T-cell (primary cell): ENCODE measurements at regions of chr16 and their contacts with region 1.

Region 1: DNA sequence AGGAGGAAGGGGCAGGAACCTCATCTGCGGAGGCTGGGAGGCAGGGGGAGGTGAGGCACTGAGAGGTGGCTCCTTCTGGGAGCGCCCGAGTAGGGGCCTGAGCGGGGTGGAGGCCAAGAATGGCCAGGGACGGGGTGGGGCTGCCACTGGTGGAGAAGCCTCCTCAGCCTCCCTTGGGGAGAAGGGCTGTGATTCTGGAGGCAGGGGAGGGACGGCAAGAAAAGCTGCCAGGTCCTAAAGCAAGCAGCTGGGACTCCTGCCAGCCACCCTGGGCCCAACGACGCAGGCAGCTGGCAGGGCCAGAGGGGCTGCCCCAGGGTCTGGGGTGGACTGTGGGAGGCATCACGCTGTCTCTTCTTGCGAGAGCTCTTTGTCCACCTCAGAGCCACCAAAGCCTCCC is 12.7 kb upstream of the MLKL start:
- DNase-seq: no peak
- ATAC-seq: no peak
- H3K4me3 ChIP-seq: no peak overlapping the region
- H3K4me3 Mint-ChIP-seq: no peak overlapping the region
- H3K27ac ChIP-seq: no peak overlapping the region
- H3K27ac Mint-ChIP-seq: no peak overlapping the region
- H3K4me1 ChIP-seq: no peaks in the 10 kb centered on the region
- H3K4me1 Mint-ChIP-seq: peaks cover 3 to 7% (median 5%) of the 10 kb centered on the region in 3 donors
- H3K27me3 ChIP-seq: no peaks in the 10 kb centered on the region
- H3K27me3 Mint-ChIP-seq: no peaks in the 10 kb centered on the region

Region 2: DNA sequence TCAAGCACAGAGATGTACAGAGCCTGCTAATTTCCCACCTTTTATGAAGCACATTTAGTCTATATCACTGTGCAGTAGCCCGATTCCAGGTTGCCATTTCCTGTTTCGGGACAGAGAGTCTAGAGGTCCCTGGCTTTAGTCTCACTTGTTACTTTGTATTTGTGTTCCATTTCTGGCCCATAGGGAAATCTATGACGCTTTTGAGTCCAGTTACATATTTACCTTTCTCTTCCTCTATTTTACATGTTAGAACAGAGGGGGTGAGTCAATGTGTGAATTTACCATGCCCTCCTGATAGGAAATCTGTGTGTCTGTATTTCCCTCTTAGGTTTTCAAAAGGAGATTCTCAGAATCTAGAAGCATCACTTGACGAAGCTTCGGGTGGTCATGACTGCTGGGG is 1438.3 kb before region 1 on chr16:
- CTCF ChIA-PET with region 1: no interaction called
- POLR2A ChIA-PET with region 1: no interaction called
- DNase-seq: no peak
- ATAC-seq: no peak
- H3K4me3 ChIP-seq: no peak overlapping the region
- H3K4me3 Mint-ChIP-seq: no peak overlapping the region
- H3K27ac ChIP-seq: no peak overlapping the region
- H3K27ac Mint-ChIP-seq: no peak overlapping the region
- H3K4me1 ChIP-seq: no peaks in the 10 kb centered on the region
- H3K4me1 Mint-ChIP-seq: no peaks in the 10 kb centered on the region
- H3K27me3 ChIP-seq: peaks cover 0 to 2% of the 10 kb centered on the region in 2 experiments
- H3K27me3 Mint-ChIP-seq: peaks cover 2 to 4% of the 10 kb centered on the region in 2 donors

Region 3: DNA sequence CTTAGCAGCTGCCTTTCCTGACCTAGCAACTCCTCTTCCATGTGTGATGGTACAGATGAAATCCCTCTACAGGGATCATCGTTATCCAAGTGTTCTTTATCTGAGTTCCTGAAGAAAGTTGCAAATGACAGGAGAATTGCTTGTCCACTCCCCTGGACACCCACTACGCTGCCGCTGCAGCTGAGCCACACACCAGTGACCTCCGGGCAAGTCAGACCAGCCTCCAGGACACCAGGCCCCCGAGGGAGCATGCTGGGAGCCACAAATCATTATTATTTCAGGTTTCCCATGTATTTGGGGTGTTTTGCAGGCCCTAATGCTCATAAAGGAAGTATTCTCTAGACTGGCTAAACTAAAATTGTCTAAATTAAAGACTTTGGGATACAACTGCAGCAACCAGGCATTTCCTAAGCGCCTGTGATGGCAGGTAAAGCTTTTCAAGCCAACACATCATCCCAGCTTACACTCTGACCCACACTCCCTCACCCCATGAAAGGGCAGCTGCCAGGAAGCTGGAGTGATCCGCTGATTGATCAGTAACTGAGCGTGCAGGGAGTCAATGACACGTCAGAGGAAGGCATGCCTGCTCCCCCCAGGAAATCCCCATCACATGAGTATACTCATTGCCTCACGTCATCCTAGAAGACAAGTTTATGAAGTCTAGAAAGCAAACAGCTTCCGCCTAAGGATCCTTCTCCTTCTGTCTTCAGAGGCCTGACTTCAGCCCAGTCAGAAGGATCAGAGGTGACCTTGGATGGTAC is 46.9 kb after region 1 on chr16:
- CTCF ChIA-PET with region 1: no interaction called
- POLR2A ChIA-PET with region 1: no interaction called
- DNase-seq: peak in 1 of 35 experiments; percentile 24
- ATAC-seq: peak in 1 of 4 experiments; percentile 16
- H3K4me3 ChIP-seq: no peak overlapping the region
- H3K4me3 Mint-ChIP-seq: no peak overlapping the region
- H3K27ac ChIP-seq: no peak overlapping the region
- H3K27ac Mint-ChIP-seq: no peak overlapping the region
- H3K4me1 ChIP-seq: no peaks in the 10 kb centered on the region
- H3K4me1 Mint-ChIP-seq: no peaks in the 10 kb centered on the region
- H3K27me3 ChIP-seq: no peaks in the 10 kb centered on the region
- H3K27me3 Mint-ChIP-seq: peaks cover 4 to 12% of the 10 kb centered on the region in 2 donors

Region 4: GRCh38 chr16:74771656-74772315 is 58.5 kb after region 1 on chr16:
- CTCF ChIA-PET with region 1: no interaction called
- POLR2A ChIA-PET with region 1: no interaction called
- DNase-seq: no peak
- ATAC-seq: no peak
- H3K4me3 ChIP-seq: no peak overlapping the region
- H3K4me3 Mint-ChIP-seq: no peak overlapping the region
- H3K27ac ChIP-seq: no peak overlapping the region
- H3K27ac Mint-ChIP-seq: no peak overlapping the region
- H3K4me1 ChIP-seq: peaks cover 4 to 9% of the 10 kb centered on the region in 2 experiments
- H3K4me1 Mint-ChIP-seq: peaks cover 8 to 17% (median 12%) of the 10 kb centered on the region in 3 donors
- H3K27me3 ChIP-seq: peaks cover 0 to 55% of the 10 kb centered on the region in 2 experiments
- H3K27me3 Mint-ChIP-seq: peaks cover 34 to 44% of the 10 kb centered on the region in 2 donors

Region 5: DNA sequence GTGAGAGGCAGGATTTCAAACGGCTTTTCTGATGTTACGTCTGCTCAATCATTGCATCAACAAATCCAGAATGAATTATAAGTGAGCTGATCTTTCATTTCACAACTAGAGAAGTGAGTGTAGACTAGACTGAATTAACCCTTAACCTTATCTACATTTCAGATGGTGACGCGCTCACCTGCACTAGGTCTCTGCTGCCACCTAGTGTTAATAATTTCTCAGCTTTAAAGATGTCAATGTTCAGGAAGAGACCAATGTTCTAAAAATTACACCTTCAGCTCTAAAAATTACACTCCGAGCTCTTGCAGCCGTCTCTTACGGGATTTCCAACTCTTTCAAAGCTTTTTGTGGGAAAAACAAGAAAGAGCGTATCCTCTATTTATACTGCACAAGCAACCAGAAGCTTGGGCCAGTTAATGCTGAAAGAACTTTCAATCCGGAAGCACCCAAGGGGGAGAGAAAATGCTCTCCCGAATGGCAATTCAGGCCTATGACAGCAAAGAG is 149.5 kb after region 1 on chr16:
- CTCF ChIA-PET with region 1: interaction called, 6 to 12 read pairs
- POLR2A ChIA-PET with region 1: no interaction called
- DNase-seq: peak in 2 of 35 experiments; percentile 11 to 62
- ATAC-seq: no peak
- H3K4me3 ChIP-seq: no peak overlapping the region
- H3K4me3 Mint-ChIP-seq: no peak overlapping the region
- H3K27ac ChIP-seq: no peak overlapping the region
- H3K27ac Mint-ChIP-seq: no peak overlapping the region
- H3K4me1 ChIP-seq: peaks cover 3 to 6% of the 10 kb centered on the region in 2 experiments
- H3K4me1 Mint-ChIP-seq: peaks cover 5 to 15% (median 12%) of the 10 kb centered on the region in 3 donors
- H3K27me3 ChIP-seq: no peaks in the 10 kb centered on the region
- H3K27me3 Mint-ChIP-seq: no peaks in the 10 kb centered on the region